ENCODE measurements at regions of chr4 and their contacts with region 1.

Region 1: GRCh38 chr4:185425647-185426352 is at the start of gene UFSP2:
- DNase-seq: peak; percentile 92
- CTCF ChIP-seq: no peak

Region 2: DNA sequence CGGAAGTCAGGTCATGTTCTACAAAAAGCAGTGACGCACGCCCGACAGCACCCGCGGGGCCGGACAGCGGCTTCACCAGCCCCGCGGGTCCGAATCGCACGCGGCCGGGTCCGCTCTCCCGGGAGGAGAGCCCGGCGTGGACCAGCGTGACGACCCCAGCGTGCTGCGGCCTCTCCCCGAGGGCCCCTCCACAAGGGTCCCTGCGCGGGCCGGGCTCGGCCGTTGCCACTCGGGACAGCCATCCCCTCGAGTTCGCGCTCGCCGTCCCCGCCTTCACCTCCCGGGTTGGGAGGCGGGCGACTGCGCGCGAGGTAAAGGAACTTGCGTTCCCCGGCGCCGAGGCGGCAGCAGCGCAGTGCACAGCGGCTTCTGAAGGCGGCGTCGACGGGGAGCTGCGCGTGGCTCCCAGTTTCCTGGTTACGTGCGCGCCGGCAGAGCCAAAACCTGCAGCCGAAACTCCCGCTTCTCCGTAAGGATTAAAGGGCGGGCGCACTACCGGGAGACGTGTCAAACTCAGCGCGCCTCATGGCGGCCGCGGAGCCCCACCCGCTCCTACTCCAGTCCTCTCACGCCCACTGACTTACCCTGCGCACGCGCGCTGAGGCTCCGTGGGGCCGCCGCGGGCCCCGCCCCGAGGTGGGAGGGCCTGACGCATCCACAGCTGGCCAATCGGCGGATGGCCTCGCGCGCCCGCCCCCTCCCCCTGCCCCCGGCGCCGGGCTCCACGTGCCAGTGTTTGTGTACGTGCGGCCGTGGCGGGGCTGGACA is 29.7 kb before region 1 on chr4:
- CTCF ChIA-PET with region 1: interaction called, 5 read pairs
- POLR2A ChIA-PET with region 1: interaction called, 16 read pairs
- DNase-seq: peak; percentile 99
- CTCF ChIP-seq: no peak

Region 3: DNA sequence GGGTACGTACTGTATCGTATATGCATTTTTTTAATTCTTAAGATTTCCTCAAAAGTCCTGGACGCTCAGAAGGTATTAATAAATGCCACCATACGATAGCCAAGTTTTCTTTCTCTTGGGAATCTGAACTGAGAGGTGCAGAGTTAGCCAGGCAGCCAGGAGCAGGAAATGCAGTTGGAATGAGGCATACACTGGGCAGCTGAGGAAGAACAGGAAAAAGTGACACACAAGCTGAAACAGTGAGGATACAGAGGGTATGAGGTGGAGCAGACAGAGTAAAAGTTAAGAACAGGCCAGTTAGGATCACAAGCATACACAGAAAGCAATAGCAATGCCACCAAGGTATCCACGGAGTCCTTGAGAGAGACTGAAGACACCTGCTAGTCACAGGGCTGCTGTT is 13.4 kb before region 1 on chr4:
- CTCF ChIA-PET with region 1: interaction called, 10 read pairs
- POLR2A ChIA-PET with region 1: no interaction called
- DNase-seq: no peak
- CTCF ChIP-seq: no peak

Region 4: GRCh38 chr4:185465707-185466106 is 39.9 kb after region 1 on chr4:
- CTCF ChIA-PET with region 1: no interaction called
- POLR2A ChIA-PET with region 1: no interaction called
- DNase-seq: no peak
- CTCF ChIP-seq: no peak

Region 5: GRCh38 chr4:185488650-185489049 is 62.9 kb after region 1 on chr4:
- CTCF ChIA-PET with region 1: no interaction called
- POLR2A ChIA-PET with region 1: no interaction called
- DNase-seq: no peak
- CTCF ChIP-seq: no peak

Measured in GM10248 (cell line).